B cell (primary cell): ENCODE measurements at regions of chr2 and their contacts with region 1.

Region 1: GRCh38 chr2:161104054-161104553 is 56.1 kb upstream of the TANK start:
- DNase-seq: peak; percentile 14
- ATAC-seq: peak; percentile 33
- H3K4me3 ChIP-seq: peak overlapping the region in 1 of 5 experiments; percentile 43
- H3K4me3 Mint-ChIP-seq: peak overlapping the region; percentile 83
- H3K27ac ChIP-seq: no peak overlapping the region
- H3K27ac Mint-ChIP-seq: peak overlapping the region; percentile 72
- H3K4me1 ChIP-seq: peaks cover 0 to 6% of the 10 kb centered on the region in 2 donors
- H3K4me1 Mint-ChIP-seq: peaks cover 19% of the 10 kb centered on the region
- H3K27me3 ChIP-seq: peaks cover 0 to 4% (median 0%) of the 10 kb centered on the region in 4 experiments
- H3K27me3 Mint-ChIP-seq: no peaks in the 10 kb centered on the region
- CTCF ChIP-seq: no peak

Region 2: GRCh38 chr2:161090411-161090810 is 13.7 kb before region 1 on chr2:
- CTCF ChIA-PET with region 1: interaction called, 5 read pairs
- POLR2A ChIA-PET with region 1: no interaction called
- intact Hi-C with region 1: loop called (anchors 2 kb)
- DNase-seq: peak; percentile 58
- ATAC-seq: peak; percentile 56
- H3K4me3 ChIP-seq: peak overlapping the region; percentile 11 to 58 (median 23)
- H3K4me3 Mint-ChIP-seq: peak overlapping the region; percentile 60
- H3K27ac ChIP-seq: peak overlapping the region in 1 of 2 donors; percentile 43
- H3K27ac Mint-ChIP-seq: peak overlapping the region; percentile 84
- H3K4me1 ChIP-seq: peaks cover 30 to 33% of the 10 kb centered on the region in 2 donors
- H3K4me1 Mint-ChIP-seq: peaks cover 45% of the 10 kb centered on the region
- H3K27me3 ChIP-seq: no peaks in the 10 kb centered on the region
- H3K27me3 Mint-ChIP-seq: no peaks in the 10 kb centered on the region
- CTCF ChIP-seq: no peak

Region 3: DNA sequence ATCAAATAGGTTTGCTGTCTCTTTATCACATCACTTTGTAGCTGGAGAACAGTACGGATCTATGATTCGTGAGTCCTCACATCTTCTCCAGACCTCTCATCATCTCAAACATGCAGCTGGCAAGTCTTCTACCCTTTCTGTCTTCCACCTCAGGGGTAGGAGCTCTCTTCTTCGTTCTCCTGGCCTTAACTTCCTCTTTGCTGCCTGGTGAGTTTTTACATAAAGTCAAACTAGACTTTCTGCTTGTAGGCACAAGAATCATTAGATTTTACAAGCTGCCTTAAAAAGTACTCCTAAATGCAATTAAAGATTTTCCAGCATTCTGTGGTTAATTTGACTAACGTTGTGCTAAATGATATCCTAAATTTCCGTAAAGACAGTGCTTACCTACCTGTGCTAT is 12.4 kb after region 1 on chr2:
- CTCF ChIA-PET with region 1: interaction called, 5 read pairs
- POLR2A ChIA-PET with region 1: no interaction called
- intact Hi-C with region 1: loop called (anchors 2 kb)
- DNase-seq: peak; percentile 40
- ATAC-seq: peak; percentile 39
- H3K4me3 ChIP-seq: no peak overlapping the region
- H3K4me3 Mint-ChIP-seq: no peak overlapping the region
- H3K27ac ChIP-seq: no peak overlapping the region
- H3K27ac Mint-ChIP-seq: no peak overlapping the region
- H3K4me1 ChIP-seq: peaks cover 4 to 8% of the 10 kb centered on the region in 2 donors
- H3K4me1 Mint-ChIP-seq: peaks cover 26% of the 10 kb centered on the region
- H3K27me3 ChIP-seq: no peaks in the 10 kb centered on the region
- H3K27me3 Mint-ChIP-seq: no peaks in the 10 kb centered on the region
- CTCF ChIP-seq: no peak

Region 4: DNA sequence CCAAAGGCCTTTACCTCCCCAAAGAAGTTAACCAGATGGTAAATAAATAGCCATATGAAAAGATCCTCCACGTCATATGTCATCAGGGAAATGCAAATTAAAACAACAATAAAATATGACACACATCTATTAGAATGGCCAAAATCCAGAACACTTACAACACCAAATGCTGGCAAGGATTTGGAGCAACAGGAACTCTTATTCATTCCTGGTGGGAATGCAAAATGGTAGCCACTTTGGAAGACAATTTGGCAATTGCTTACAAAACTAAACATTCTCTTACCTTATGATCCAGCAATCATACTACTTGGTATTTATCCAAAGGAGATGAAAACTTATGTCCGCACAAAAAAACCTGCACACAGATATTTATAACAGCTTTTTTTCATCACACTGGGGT is 54.8 kb after region 1 on chr2:
- CTCF ChIA-PET with region 1: no interaction called
- POLR2A ChIA-PET with region 1: no interaction called
- intact Hi-C with region 1: no loop called
- DNase-seq: no peak
- ATAC-seq: no peak
- H3K4me3 ChIP-seq: no peak overlapping the region
- H3K4me3 Mint-ChIP-seq: peak overlapping the region; percentile 51
- H3K27ac ChIP-seq: no peak overlapping the region
- H3K27ac Mint-ChIP-seq: peak overlapping the region; percentile 46
- H3K4me1 ChIP-seq: peaks cover 29 to 35% of the 10 kb centered on the region in 2 donors
- H3K4me1 Mint-ChIP-seq: peaks cover 77% of the 10 kb centered on the region
- H3K27me3 ChIP-seq: no peaks in the 10 kb centered on the region
- H3K27me3 Mint-ChIP-seq: no peaks in the 10 kb centered on the region
- CTCF ChIP-seq: no peak